ENCODE measurements at regions of chr14 and their contacts with region 1.

Region 1: GRCh38 chr14:102694530-102695166 is 82.6 kb upstream of the TRAF3 start:
- DNase-seq: peak; percentile 52
- H3K4me3 Mint-ChIP-seq: no peak overlapping the region
- H3K27ac Mint-ChIP-seq: no peak overlapping the region
- H3K4me1 Mint-ChIP-seq: peaks cover 6% of the 10 kb centered on the region
- H3K27me3 Mint-ChIP-seq: no peaks in the 10 kb centered on the region

Region 2: GRCh38 chr14:102524466-102525218 is 170.0 kb before region 1 on chr14:
- CTCF ChIA-PET with region 1: interaction called, 12 read pairs
- POLR2A ChIA-PET with region 1: interaction called, 3 read pairs
- DNase-seq: peak; percentile 97
- H3K4me3 Mint-ChIP-seq: peak overlapping the region; percentile 82
- H3K27ac Mint-ChIP-seq: peak overlapping the region; percentile 81
- H3K4me1 Mint-ChIP-seq: peaks cover 42% of the 10 kb centered on the region
- H3K27me3 Mint-ChIP-seq: no peaks in the 10 kb centered on the region

Region 3: DNA sequence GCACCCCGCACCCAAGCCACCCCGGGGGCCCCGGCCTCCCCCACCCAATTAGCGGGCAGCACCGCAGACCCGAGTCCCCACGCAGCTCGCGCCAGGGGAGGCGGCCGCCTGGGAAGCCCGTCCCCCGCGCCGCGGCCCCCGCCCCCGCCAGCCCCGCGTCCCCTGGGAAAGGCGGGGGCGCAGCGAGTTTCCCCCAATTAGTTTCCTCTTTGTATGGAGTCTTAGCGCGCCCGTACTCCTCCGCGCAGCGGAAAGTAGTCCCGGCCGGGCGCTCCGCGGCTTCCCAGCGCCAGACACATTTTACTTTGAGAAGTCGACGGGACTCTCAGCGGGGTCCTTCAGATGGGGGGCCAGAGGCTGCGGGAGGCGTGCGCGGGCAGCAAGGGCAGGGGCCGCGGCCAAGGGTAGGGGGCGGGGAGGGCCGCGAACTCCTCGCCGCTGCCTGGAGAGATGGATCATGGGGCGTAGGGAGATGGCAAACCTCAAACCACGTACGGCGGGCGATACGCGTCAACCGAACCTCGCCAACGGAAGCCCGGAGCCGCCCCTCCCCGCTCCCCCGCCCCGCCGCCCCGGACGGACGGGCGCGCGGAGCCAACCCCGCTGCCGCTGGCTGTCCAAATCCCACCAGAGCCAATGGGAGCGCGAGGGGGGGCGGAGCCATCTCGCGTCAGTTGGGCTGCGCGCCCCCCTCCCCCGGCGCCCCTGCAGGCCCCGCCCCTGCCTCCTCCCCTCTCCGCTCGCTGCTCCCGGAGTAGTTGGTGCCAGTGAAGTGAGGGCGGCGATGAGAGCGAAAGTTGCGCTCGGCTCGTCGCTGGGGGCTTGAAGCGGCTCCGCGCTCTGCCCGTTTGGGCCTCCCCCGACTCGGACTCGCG is 102.5 kb before region 1 on chr14 and contains the start of gene RCOR1:
- CTCF ChIA-PET with region 1: interaction called, 16 read pairs
- POLR2A ChIA-PET with region 1: interaction called, 3 read pairs
- DNase-seq: peak; percentile 98
- H3K4me3 Mint-ChIP-seq: peak within 1 kb of the TSS; percentile 91
- H3K27ac Mint-ChIP-seq: peak within 1 kb of the TSS; percentile 88
- H3K4me1 Mint-ChIP-seq: peaks cover 24% of the 10 kb centered on the region
- H3K27me3 Mint-ChIP-seq: no peaks in the 10 kb centered on the region
- total RNA-seq, gene RCOR1: 22.1 to 23.4 TPM

Region 4: GRCh38 chr14:102668291-102668873 is 26.3 kb before region 1 on chr14:
- CTCF ChIA-PET with region 1: interaction called, 12 read pairs
- POLR2A ChIA-PET with region 1: no interaction called
- DNase-seq: no peak
- H3K4me3 Mint-ChIP-seq: no peak overlapping the region
- H3K27ac Mint-ChIP-seq: no peak overlapping the region
- H3K4me1 Mint-ChIP-seq: no peaks in the 10 kb centered on the region
- H3K27me3 Mint-ChIP-seq: no peaks in the 10 kb centered on the region

Region 5: GRCh38 chr14:102708494-102708893 is 13.8 kb after region 1 on chr14:
- CTCF ChIA-PET with region 1: interaction called, 13 read pairs
- POLR2A ChIA-PET with region 1: no interaction called
- DNase-seq: no peak
- H3K4me3 Mint-ChIP-seq: no peak overlapping the region
- H3K27ac Mint-ChIP-seq: no peak overlapping the region
- H3K4me1 Mint-ChIP-seq: no peaks in the 10 kb centered on the region
- H3K27me3 Mint-ChIP-seq: no peaks in the 10 kb centered on the region

Region 6: DNA sequence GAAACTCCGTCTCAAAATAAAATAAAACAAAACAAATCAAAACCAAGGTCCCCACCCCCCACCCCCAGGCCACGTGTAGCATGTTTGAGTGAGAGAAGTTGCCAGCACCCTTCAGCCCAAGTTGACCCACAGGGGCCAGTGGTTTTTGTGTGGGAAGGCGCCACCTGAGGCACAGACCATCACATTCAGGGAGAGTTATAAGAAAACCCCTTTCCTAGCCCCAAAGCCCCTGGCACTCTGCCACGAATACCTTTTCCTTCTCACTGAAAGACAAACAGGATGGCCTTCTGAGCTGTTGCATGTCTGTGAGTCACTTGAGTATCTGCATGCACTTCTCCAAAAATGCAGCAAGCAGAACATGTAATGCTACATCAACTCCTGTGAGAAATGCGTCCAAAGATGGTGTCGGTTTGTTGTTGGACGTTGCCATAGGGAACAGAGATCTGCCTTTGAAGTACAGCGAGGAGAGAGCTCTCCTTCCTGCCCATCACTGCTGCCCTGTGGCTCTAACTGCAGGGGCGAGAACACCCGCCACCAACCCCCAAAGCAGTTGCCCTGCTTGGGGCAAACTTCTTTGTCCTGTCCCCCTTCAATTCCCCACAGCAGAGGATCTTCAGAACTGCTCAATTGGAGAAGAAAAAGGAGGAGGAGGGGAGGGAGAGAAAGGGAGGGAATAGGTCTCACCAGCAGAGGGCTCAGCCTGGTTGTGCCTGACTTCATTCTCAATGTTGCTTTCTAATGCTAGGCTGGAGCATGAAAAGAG is 79.9 kb after region 1 on chr14:
- CTCF ChIA-PET with region 1: interaction called, 13 read pairs
- POLR2A ChIA-PET with region 1: no interaction called
- DNase-seq: peak; percentile 66
- H3K4me3 Mint-ChIP-seq: no peak overlapping the region
- H3K27ac Mint-ChIP-seq: peak overlapping the region; percentile 66
- H3K4me1 Mint-ChIP-seq: peaks cover 26% of the 10 kb centered on the region
- H3K27me3 Mint-ChIP-seq: no peaks in the 10 kb centered on the region

Region 7: GRCh38 chr14:102917469-102918211 is 223.0 kb after region 1 on chr14:
- CTCF ChIA-PET with region 1: interaction called, 12 read pairs
- POLR2A ChIA-PET with region 1: no interaction called
- DNase-seq: peak; percentile 66
- H3K4me3 Mint-ChIP-seq: no peak overlapping the region
- H3K27ac Mint-ChIP-seq: no peak overlapping the region
- H3K4me1 Mint-ChIP-seq: peaks cover 2% of the 10 kb centered on the region
- H3K27me3 Mint-ChIP-seq: no peaks in the 10 kb centered on the region